Activated T-helper 1 cell treated with anti-CD3 and anti-CD28 coated beads, Interleukin-12 subunit alpha, Interleukin-12 subunit beta, Interleukin-2, Interleukin-4 antibody, amounts not matched to agents 30 ng/mL and 10 ng/mL and 1 ng/mL, durations not matched to agents 14 hours and 24 hours and 36 hours (primary cell): ENCODE measurements at regions of chr15 and their contacts with region 1.

Region 1: DNA sequence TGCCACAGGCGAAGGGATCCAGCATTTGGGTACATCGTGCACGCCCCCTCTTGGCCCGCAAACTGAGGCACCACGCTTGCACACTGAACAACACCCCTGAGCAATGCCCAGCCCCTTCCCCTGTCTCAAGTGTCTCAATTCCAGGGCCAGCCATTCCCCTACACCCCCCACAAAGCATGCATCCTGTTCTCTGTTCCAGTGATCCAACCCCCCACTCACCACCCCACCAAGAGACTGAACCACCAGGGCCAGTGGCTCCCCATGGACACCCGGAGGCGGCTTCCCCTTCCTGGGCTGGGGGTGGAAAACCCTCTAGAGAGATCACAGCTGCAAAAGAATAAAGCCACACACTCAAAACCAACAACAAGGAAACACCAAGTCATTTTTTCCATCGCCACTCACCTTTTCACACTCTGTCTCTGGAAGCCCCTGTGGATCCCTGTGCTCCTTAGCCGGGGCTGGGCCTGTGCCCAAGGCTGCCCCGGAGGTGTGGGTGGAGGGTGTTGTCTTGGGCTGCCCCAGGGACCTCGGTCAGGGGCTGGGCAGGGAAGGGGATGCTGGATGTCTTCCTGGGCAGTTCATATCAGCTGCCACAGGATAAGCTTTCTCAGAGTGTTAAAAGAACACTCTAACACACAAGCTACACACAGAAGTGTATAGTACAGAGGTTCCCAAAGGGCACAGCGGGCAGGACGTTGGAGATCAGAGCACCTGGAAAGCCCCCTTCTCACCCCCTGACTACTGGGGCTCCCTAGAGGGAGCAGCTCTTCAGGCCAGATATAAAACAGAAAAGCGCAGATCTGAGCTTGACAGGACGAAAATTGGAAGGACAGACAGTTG is 92.5 kb downstream of the CHSY1 start:
- DNase-seq: peak; percentile 47
- H3K4me3 Mint-ChIP-seq: peak overlapping the region; percentile 43
- H3K27ac Mint-ChIP-seq: peak overlapping the region; percentile 94
- H3K4me1 Mint-ChIP-seq: peaks cover 48% of the 10 kb centered on the region
- H3K27me3 Mint-ChIP-seq: no peaks in the 10 kb centered on the region

Region 2: GRCh38 chr15:101127506-101128076 is 31.7 kb before region 1 on chr15:
- intact Hi-C with region 1: loop called (anchors 1 kb)
- DNase-seq: peak; percentile 41
- H3K4me3 Mint-ChIP-seq: peak overlapping the region; percentile 75
- H3K27ac Mint-ChIP-seq: peak overlapping the region; percentile 90
- H3K4me1 Mint-ChIP-seq: peaks cover 63% of the 10 kb centered on the region
- H3K27me3 Mint-ChIP-seq: no peaks in the 10 kb centered on the region

Region 3: GRCh38 chr15:101182215-101182614 is 22.9 kb after region 1 on chr15:
- intact Hi-C with region 1: loop called (anchors 1 kb)
- DNase-seq: no peak
- H3K4me3 Mint-ChIP-seq: peak overlapping the region; percentile 21
- H3K27ac Mint-ChIP-seq: peak overlapping the region; percentile 49
- H3K4me1 Mint-ChIP-seq: peaks cover 83% of the 10 kb centered on the region
- H3K27me3 Mint-ChIP-seq: no peaks in the 10 kb centered on the region

Region 4: DNA sequence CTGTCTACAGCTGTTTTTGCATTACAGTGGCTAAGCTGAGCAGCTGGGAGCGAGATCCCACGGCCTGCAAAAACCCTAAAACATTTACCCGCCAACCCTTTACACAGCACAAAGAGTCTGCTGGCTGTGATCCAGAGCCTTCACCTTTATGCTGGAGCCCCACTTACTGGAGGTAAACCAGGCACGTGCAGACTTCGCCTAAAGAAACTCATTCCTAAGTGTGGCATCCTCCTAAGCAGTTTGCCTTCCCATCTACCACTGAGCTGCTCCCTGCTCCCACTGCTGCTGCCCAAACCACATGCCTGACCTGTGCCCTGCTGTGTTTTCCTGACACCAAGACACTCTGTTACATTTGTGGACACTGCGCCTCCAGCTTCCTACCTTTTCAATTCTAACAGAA is 39.5 kb after region 1 on chr15:
- intact Hi-C with region 1: loop called (anchors 1 kb)
- DNase-seq: no peak
- H3K4me3 Mint-ChIP-seq: peak overlapping the region; percentile 68
- H3K27ac Mint-ChIP-seq: peak overlapping the region; percentile 92
- H3K4me1 Mint-ChIP-seq: peaks cover 92% of the 10 kb centered on the region
- H3K27me3 Mint-ChIP-seq: no peaks in the 10 kb centered on the region

Region 5: DNA sequence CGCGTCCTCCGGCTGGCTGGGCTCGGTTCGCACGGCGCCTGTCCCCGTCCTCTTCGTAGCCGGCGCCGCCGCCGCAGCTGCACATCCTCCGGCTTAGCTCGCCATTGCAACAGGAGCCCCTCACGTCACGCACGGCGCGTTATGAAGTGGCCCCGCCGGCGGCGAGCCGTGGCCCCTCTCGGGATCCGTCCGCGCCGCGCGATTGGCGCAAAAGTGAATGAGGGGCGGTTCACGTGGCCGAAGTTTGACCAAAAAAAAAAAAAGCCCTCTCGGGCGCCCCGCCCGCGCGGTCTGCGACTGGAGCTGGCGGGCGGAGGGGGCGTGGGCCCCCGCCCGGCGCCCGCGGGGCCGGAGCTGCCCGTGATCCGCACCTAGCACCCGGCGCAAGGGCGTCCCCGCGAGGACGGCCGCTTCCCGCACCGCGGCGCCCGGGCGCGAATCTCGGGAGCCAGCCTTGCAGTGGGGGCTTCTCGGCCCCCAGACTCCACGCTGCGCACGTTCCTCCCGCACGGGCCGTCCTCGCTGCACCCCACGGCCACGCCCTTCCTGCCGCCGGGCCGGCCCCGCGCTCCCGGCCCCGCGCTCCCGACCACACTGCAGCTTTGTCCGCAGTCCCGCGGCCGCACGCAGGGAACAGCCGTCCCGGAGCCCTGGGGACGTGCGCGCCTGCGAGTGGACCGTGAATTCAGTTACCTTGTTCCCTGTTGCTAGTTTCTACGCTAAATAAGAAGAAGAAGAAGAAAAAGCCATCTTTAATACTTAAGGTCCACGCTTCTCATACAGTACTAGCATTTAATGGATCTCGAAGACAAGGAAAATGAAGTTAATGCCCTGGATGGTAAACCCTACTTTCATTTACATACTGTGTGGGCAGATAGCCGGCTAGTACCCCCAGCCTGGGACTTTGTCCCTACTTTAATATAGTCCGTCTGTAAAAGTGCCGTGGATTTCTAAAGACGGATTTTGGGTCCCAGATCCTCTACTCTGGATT is 92.8 kb after region 1 on chr15 and contains the start of gene CHSY1:
- intact Hi-C with region 1: loop called (anchors 2 kb)
- DNase-seq: peak; percentile 88
- H3K4me3 Mint-ChIP-seq: peak within 1 kb of the TSS; percentile 91
- H3K27ac Mint-ChIP-seq: peak within 1 kb of the TSS; percentile 90
- H3K4me1 Mint-ChIP-seq: peaks cover 69% of the 10 kb centered on the region
- H3K27me3 Mint-ChIP-seq: no peaks in the 10 kb centered on the region
- total RNA-seq, gene CHSY1: 76.3 and 78.0 TPM in 2 replicates